Right ventricle myocardium superior (tissue), 1 donor: ENCODE measurements at regions of chr15 and their contacts with region 1.

Region 1: GRCh38 chr15:28123408-28124023 is 24.4 kb upstream of the OCA2 start:
- DNase-seq: peak; percentile 73
- ATAC-seq: peak; percentile 54

Region 2: DNA sequence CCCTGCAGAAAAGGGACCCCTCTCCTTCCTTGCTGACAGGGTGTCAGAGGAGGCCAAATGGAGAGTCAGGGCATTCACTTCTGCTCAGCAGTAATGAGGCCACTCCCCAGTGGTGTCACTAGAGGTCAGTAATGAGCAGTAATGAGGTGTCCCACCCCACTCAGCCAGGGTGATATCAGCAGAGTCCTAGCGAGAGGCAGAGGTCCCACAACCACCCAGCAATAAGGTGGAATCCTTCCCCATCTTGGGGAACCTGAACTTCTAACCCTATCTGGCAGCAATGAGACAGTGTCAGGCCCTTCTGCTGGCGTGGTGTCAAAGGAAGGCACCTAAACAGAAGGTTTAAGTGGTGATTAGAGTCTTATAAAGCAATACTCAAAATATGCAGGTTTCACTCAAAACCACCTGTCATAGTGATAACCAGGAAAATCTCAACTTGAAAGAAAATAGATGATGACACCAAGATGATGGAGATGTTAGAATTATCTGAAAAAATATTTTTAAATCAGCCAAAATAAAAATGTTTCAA is 37.3 kb before region 1 on chr15:
- intact Hi-C with region 1: loop called (anchors 5 kb)
- DNase-seq: no peak
- ATAC-seq: peak; percentile 97

Region 3: GRCh38 chr15:28208583-28208982 is 85.1 kb after region 1 on chr15:
- intact Hi-C with region 1: no loop called
- DNase-seq: no peak
- ATAC-seq: peak; percentile 73